Natural killer cell (primary cell): ENCODE measurements at regions of chr20 and their contacts with region 1.

Region 1: GRCh38 chr20:5297280-5298004 is 19.3 kb downstream of the PROKR2 start:
- DNase-seq: peak in 1 of 2 donors; percentile 9
- ATAC-seq: no peak
- H3K4me3 ChIP-seq: no peak overlapping the region
- H3K4me3 Mint-ChIP-seq: no peak overlapping the region
- H3K27ac ChIP-seq: no peak overlapping the region
- H3K27ac Mint-ChIP-seq: no peak overlapping the region
- H3K4me1 ChIP-seq: no peaks in the 10 kb centered on the region
- H3K4me1 Mint-ChIP-seq: peaks cover 0 to 4% of the 10 kb centered on the region in 2 donors
- H3K27me3 ChIP-seq: no peaks in the 10 kb centered on the region
- H3K27me3 Mint-ChIP-seq: peaks cover 21 to 61% of the 10 kb centered on the region in 2 donors
- CTCF ChIP-seq: no peak

Region 2: GRCh38 chr20:5234158-5234557 is 63.3 kb before region 1 on chr20:
- intact Hi-C with region 1: loop called (anchors 10 kb)
- DNase-seq: no peak
- ATAC-seq: no peak
- H3K4me3 ChIP-seq: no peak overlapping the region
- H3K4me3 Mint-ChIP-seq: no peak overlapping the region
- H3K27ac ChIP-seq: no peak overlapping the region
- H3K27ac Mint-ChIP-seq: no peak overlapping the region
- H3K4me1 ChIP-seq: no peaks in the 10 kb centered on the region
- H3K4me1 Mint-ChIP-seq: no peaks in the 10 kb centered on the region
- H3K27me3 ChIP-seq: no peaks in the 10 kb centered on the region
- H3K27me3 Mint-ChIP-seq: peaks cover 42 to 78% of the 10 kb centered on the region in 2 donors
- CTCF ChIP-seq: no peak